ENCODE measurements at regions of chr2 and their contacts with region 1.

Region 1: DNA sequence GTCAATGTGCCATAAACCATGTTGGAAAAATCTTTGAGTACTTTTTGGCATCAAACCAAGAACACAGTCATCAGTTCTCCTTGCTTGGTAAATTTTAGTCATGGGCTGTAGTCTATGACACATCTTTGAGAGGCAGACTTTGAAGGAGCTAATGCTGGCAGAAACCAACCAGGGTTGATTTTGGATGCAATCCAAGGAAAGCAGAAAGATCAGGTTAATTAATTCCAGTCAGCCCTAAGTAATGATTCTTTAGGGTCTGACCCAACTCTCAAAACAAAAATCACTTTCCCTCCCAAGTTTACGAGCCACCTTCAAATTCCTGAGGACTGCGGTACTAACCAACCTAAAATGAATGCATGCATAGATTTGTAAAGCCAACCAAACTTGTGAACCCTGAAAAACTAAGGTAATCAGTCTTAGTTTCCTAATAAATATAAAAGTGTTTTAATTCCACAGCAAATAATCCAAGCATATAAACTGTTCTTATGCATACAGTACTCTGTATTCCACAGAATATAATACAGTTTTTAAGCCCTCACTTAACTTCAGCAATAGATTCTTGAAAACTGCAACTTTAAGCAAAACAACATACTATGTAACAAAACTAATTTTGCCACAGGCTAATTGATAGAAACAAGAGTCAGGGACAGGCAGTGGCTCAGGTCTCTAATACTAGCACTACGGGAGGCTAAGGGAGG is 22.0 kb downstream of the AP1S3 start:
- DNase-seq: no peak
- H3K4me3 ChIP-seq: no peak overlapping the region
- H3K27ac ChIP-seq: no peak overlapping the region
- H3K4me1 ChIP-seq: peaks cover 70% of the 10 kb centered on the region
- CTCF ChIP-seq: no peak

Region 2: DNA sequence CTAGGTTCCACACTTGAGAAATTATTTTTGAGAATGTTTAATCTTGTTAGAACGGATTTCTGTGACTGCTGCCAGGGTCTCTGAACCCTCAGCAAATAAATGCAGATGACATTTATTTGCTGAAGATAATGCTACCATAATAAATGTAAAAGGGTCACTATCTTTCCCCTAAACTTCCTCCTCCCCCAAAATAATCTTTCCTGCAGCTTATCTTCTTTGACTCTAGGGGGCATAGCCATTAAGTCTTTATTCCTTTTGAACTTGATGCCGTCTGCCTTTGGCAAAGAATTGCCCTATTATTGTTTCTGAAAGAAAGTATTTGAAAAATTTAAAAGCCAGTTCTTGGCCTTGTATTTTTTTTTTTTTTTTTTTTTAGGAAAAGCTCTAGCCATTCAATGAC is 1018.1 kb before region 1 on chr2:
- CTCF ChIA-PET with region 1: no interaction called
- POLR2A ChIA-PET with region 1: no interaction called
- intact Hi-C with region 1: loop called (anchors 10 kb)
- DNase-seq: peak; percentile 39
- H3K4me3 ChIP-seq: no peak overlapping the region
- H3K27ac ChIP-seq: no peak overlapping the region
- H3K4me1 ChIP-seq: peaks cover 51% of the 10 kb centered on the region
- CTCF ChIP-seq: peak; percentile 80

Region 3: DNA sequence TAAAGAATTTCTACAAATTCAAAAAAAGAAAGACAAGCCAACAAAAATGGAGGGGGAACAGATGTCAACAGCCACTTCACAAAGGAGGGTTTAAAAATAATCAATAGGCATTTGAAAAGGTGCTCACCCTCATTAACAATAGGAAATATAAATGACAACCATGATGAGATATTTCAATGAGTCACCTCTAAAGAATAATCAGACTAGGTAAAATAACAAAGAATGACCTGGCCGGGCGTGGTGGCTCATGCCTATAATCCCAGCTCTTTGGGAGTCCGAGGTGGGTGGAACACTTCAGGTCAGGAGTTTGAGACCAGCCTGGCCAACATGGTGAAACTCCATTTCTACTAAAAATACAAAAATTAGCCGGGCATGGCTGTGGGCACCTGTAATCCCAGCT is 629.7 kb before region 1 on chr2:
- CTCF ChIA-PET with region 1: no interaction called
- POLR2A ChIA-PET with region 1: no interaction called
- intact Hi-C with region 1: no loop called
- DNase-seq: no peak
- H3K4me3 ChIP-seq: no peak overlapping the region
- H3K27ac ChIP-seq: no peak overlapping the region
- H3K4me1 ChIP-seq: no peaks in the 10 kb centered on the region
- CTCF ChIP-seq: no peak

Region 4: DNA sequence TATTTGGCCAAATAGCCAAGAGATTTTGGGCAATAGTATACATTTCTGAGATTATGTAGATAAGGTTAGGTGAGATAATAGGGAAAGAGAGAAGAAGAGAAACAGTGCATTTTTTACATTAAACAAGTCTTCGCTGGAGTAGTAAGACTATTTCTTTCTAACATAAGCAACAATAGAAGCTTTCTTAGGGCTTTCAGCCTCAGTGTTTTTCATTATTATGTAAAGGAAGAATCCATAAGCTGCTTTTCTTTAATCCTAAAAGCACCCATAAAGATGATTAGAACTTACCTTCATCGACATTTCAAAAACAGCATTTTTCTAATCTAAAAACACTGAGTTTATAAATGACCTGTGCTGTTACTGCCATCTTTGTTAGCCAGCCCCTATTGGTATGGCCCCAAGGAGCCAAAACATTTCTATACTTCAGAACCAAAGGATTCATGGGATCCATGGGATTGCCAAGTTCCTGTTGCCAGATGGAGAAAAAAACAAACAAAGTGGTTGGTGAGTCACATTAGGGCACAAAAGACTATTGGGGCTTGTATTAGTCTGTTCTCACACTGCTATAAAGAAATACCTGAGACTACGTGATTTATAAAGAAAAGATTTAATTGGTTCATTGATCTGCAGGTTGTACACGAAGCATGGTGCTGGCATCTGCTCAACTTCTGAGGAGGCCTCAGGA is 301.4 kb before region 1 on chr2:
- CTCF ChIA-PET with region 1: no interaction called
- POLR2A ChIA-PET with region 1: no interaction called
- intact Hi-C with region 1: no loop called
- DNase-seq: no peak
- H3K4me3 ChIP-seq: no peak overlapping the region
- H3K27ac ChIP-seq: no peak overlapping the region
- H3K4me1 ChIP-seq: no peaks in the 10 kb centered on the region
- CTCF ChIP-seq: no peak

Region 5: GRCh38 chr2:223692191-223692947 is 123.0 kb before region 1 on chr2:
- CTCF ChIA-PET with region 1: no interaction called
- POLR2A ChIA-PET with region 1: no interaction called
- intact Hi-C with region 1: no loop called
- DNase-seq: peak; percentile 37
- H3K4me3 ChIP-seq: no peak overlapping the region
- H3K27ac ChIP-seq: no peak overlapping the region
- H3K4me1 ChIP-seq: no peaks in the 10 kb centered on the region
- CTCF ChIP-seq: peak; percentile 74

Region 6: GRCh38 chr2:223744573-223744972 is 70.8 kb before region 1 on chr2:
- CTCF ChIA-PET with region 1: no interaction called
- POLR2A ChIA-PET with region 1: no interaction called
- intact Hi-C with region 1: no loop called
- DNase-seq: no peak
- H3K4me3 ChIP-seq: no peak overlapping the region
- H3K27ac ChIP-seq: no peak overlapping the region
- H3K4me1 ChIP-seq: no peaks in the 10 kb centered on the region
- CTCF ChIP-seq: no peak

Region 7: GRCh38 chr2:223797811-223798721 is 17.3 kb before region 1 on chr2:
- CTCF ChIA-PET with region 1: interaction called, 3 read pairs
- POLR2A ChIA-PET with region 1: interaction called, 178 read pairs
- intact Hi-C with region 1: no loop called
- DNase-seq: peak; percentile 83
- H3K4me3 ChIP-seq: peak overlapping the region; percentile 22
- H3K27ac ChIP-seq: peak overlapping the region; percentile 22
- H3K4me1 ChIP-seq: peaks cover 44% of the 10 kb centered on the region
- CTCF ChIP-seq: peak; percentile 72

Region 8: GRCh38 chr2:223828314-223828713 is 13.0 kb after region 1 on chr2:
- CTCF ChIA-PET with region 1: interaction called, 5 read pairs
- POLR2A ChIA-PET with region 1: interaction called, 66 read pairs
- intact Hi-C with region 1: no loop called
- DNase-seq: peak; percentile 43
- H3K4me3 ChIP-seq: no peak overlapping the region
- H3K27ac ChIP-seq: no peak overlapping the region
- H3K4me1 ChIP-seq: peaks cover 89% of the 10 kb centered on the region
- CTCF ChIP-seq: peak; percentile 55; the same call in 1 of the 2 replicates

Region 9: GRCh38 chr2:224749136-224749535 is 933.8 kb after region 1 on chr2:
- CTCF ChIA-PET with region 1: no interaction called
- POLR2A ChIA-PET with region 1: no interaction called
- intact Hi-C with region 1: loop called (anchors 5 kb)
- DNase-seq: no peak
- H3K4me3 ChIP-seq: no peak overlapping the region
- H3K27ac ChIP-seq: no peak overlapping the region
- H3K4me1 ChIP-seq: peaks cover 60% of the 10 kb centered on the region
- CTCF ChIP-seq: peak; percentile 56

Region 10: GRCh38 chr2:224946895-224947294 is 1131.6 kb after region 1 on chr2:
- CTCF ChIA-PET with region 1: no interaction called
- POLR2A ChIA-PET with region 1: interaction called, 5 read pairs
- intact Hi-C with region 1: loop called (anchors 10 kb)
- DNase-seq: peak; percentile 86
- H3K4me3 ChIP-seq: peak overlapping the region; percentile 83
- H3K27ac ChIP-seq: peak overlapping the region; percentile 92
- H3K4me1 ChIP-seq: peaks cover 80% of the 10 kb centered on the region
- CTCF ChIP-seq: no peak

Measured in OCI-LY7 (cell line).